HepG2 (cell line): ENCODE measurements at regions of chr6 and their contacts with region 1.

Region 1: GRCh38 chr6:71383901-71384489 is 95.4 kb downstream of the OGFRL1 start:
- DNase-seq: peak; percentile 15
- ATAC-seq: no peak
- H3K4me3 ChIP-seq: no peak overlapping the region
- H3K27ac ChIP-seq: no peak overlapping the region
- H3K4me1 ChIP-seq: no peaks in the 10 kb centered on the region
- H3K27me3 ChIP-seq: no peaks in the 10 kb centered on the region
- CTCF ChIP-seq: peak; percentile 38; the same call in 1 of the 2 replicates
- EP300 ChIP-seq: no peak
- POLR2A ChIP-seq: no peak
- RAD21 ChIP-seq: no peak

Region 2: GRCh38 chr6:71444222-71444621 is 60.2 kb after region 1 on chr6:
- CTCF ChIA-PET with region 1: interaction called, 7 read pairs
- POLR2A ChIA-PET with region 1: no interaction called
- in situ Hi-C with region 1: no loop called
- intact Hi-C with region 1: loop called (anchors 1 kb)
- DNase-seq: peak; percentile 3
- ATAC-seq: no peak
- H3K4me3 ChIP-seq: no peak overlapping the region
- H3K27ac ChIP-seq: no peak overlapping the region
- H3K4me1 ChIP-seq: no peaks in the 10 kb centered on the region
- H3K27me3 ChIP-seq: no peaks in the 10 kb centered on the region
- CTCF ChIP-seq: no peak
- EP300 ChIP-seq: no peak
- POLR2A ChIP-seq: no peak
- RAD21 ChIP-seq: no peak

Region 3: GRCh38 chr6:71510057-71510713 is 126.2 kb after region 1 on chr6:
- CTCF ChIA-PET with region 1: interaction called, 15 read pairs
- POLR2A ChIA-PET with region 1: no interaction called
- in situ Hi-C with region 1: loop called (anchors 10 kb)
- intact Hi-C with region 1: loop called (anchors 1 kb)
- DNase-seq: peak; percentile 9
- ATAC-seq: no peak
- H3K4me3 ChIP-seq: no peak overlapping the region
- H3K27ac ChIP-seq: no peak overlapping the region
- H3K4me1 ChIP-seq: no peaks in the 10 kb centered on the region
- H3K27me3 ChIP-seq: no peaks in the 10 kb centered on the region
- CTCF ChIP-seq: peak; percentile 29; the same call in 1 of the 2 replicates
- EP300 ChIP-seq: no peak
- POLR2A ChIP-seq: no peak
- RAD21 ChIP-seq: no peak

Region 4: DNA sequence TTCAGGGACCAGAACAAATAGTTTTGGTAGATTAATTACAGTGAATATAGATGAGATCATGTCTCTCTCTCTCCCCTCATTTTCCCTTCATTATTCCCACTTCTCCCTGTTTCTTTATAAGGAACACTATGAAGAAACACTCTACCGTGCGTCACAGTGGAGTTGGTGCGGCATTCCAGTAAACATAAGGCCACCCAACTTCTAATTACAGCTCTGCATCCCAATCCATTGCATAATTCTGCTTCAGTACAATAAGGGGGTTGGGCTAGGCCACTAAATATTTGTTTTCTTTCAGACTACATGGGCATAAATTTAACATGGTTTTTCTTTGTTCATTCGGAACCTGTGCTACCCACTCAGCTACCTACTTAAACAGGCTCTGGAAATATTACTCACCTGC is 191.9 kb after region 1 on chr6:
- CTCF ChIA-PET with region 1: no interaction called
- POLR2A ChIA-PET with region 1: no interaction called
- in situ Hi-C with region 1: no loop called
- intact Hi-C with region 1: no loop called
- DNase-seq: no peak
- ATAC-seq: no peak
- H3K4me3 ChIP-seq: no peak overlapping the region
- H3K27ac ChIP-seq: no peak overlapping the region
- H3K4me1 ChIP-seq: no peaks in the 10 kb centered on the region
- H3K27me3 ChIP-seq: no peaks in the 10 kb centered on the region
- CTCF ChIP-seq: no peak
- EP300 ChIP-seq: no peak
- POLR2A ChIP-seq: no peak
- RAD21 ChIP-seq: no peak

Region 5: DNA sequence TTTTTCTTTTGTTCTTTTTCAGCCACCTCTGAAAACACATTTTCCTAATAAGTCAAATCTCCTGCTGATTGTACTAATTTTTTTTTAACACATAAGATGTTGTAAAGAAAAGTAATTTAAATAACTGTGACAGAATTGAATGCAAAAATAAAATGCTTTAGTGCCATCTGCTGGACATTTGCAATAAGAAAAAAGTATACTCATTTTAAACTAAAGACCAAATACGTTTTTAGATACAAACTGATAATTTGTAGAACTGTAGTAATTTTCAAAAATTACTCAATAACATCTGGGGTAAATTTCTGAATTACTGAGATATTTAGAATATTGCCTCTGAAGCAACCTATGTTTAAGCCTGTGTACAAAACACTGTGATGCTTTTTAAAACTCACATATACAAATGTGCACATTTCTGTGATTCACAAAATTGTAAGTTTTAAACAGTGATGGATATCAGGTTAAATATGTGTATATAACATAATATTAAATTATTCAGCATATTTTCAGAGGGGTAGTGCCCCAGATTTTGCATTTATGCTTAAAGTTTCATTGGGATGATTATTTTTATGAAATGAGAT is 701.1 kb after region 1 on chr6:
- CTCF ChIA-PET with region 1: interaction called, 4 read pairs
- POLR2A ChIA-PET with region 1: no interaction called
- in situ Hi-C with region 1: loop called (anchors 25 kb)
- intact Hi-C with region 1: no loop called
- DNase-seq: no peak
- ATAC-seq: no peak
- H3K4me3 ChIP-seq: no peak overlapping the region
- H3K27ac ChIP-seq: no peak overlapping the region
- H3K4me1 ChIP-seq: no peaks in the 10 kb centered on the region
- H3K27me3 ChIP-seq: no peaks in the 10 kb centered on the region
- CTCF ChIP-seq: 0 out of 2 replicates have a peak, but pooled peaks have one; percentile 24
- EP300 ChIP-seq: no peak
- POLR2A ChIP-seq: no peak
- RAD21 ChIP-seq: no peak